ENCODE measurements at regions of chr9 and their contacts with region 1.

Region 1: DNA sequence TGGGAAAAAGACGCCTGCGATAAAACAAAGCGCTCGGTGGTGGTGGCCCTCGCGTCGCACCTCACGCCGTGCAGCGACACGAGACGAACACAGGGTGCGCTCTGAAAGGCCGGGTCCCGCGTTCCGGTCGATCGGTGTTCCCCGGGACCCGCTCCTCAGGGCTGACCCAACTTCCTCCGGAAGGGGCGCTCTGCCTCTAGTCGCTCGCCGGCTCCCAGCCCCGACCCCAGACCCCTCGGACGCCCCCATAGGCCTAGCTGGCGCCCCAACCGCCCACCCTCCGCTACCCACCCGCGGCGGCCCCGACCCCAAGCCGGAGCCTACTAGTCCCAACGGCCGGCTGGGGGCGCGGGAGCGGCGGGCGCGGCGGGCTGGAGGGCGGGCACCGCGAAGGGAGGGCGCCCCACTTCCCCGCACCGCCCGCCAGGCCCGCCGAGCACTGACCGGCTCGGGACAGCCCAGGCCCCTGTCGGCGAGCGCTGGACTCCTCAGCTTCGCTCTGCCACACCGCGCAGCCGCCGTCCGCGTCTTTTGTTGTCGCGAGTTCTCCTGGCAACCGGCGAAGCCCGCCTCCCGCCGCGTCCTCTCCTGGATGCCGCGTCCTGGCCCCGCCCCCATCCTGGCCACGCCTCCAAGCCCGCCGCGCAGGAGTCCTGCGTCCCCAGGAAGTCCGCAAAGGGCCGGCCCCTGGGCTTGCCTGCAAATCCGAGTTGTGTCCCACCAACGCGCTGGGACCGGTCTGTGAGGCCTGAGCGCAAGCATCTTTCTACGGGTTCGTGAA is at the start of gene KIF27:
- DNase-seq: peak; percentile 98
- H3K4me3 Mint-ChIP-seq: peak within 1 kb of the TSS; percentile 82
- H3K27ac Mint-ChIP-seq: peak within 1 kb of the TSS; percentile 90
- H3K4me1 Mint-ChIP-seq: peaks cover 10% of the 10 kb centered on the region
- H3K27me3 Mint-ChIP-seq: no peaks in the 10 kb centered on the region
- total RNA-seq, gene KIF27: 2.7 to 3.8 TPM

Region 2: GRCh38 chr9:83707768-83708514 is 213.2 kb before region 1 on chr9 and contains the start of gene UBQLN1:
- CTCF ChIA-PET with region 1: no interaction called
- intact Hi-C with region 1: loop called (anchors 1 kb)
- DNase-seq: peak; percentile 95
- H3K4me3 Mint-ChIP-seq: peak within 1 kb of the TSS; percentile 89
- H3K27ac Mint-ChIP-seq: peak within 1 kb of the TSS; percentile 98
- H3K4me1 Mint-ChIP-seq: peaks cover 37% of the 10 kb centered on the region
- H3K27me3 Mint-ChIP-seq: no peaks in the 10 kb centered on the region
- total RNA-seq, gene UBQLN1: 84.8 to 87.1 TPM

Region 3: DNA sequence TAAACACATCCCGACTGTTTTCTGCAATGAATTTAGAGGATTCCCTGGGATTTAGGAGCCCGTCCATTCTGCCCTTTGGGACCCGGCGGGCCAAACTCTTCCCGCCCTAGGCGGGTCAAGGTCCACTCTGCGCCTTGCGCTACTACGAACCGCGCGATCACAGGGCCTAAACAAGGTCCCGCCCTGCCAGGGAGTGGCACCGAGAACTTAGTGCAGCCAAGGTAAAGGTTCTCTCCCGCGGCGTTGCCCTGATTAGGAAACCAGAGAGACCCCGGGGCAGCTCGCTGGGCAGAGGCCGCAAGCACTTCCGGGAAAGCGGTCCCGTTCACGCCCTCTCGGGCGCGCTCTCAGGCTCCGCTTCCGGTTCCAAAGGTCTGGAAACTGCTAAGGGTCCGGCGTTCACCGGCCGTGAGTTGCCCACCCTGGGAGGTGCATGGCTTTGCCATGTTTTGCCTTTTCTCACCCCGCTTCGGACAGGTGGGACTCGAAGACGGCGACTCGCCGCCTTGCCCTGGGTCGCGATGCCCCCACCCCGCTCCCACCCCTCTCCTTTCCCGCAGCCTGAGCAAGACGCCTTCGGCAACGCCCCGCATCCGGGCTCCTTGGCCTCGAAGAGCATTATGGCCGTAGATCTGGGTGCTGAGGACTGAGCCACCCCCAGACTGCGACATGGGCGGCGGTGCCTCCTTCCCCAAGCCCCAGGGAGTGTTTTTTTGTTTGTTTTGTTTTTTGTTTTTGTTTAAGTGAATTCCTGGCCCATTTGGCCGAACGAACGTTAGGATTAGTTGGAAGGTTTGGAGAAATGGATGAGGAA is 35.5 kb after region 1 on chr9:
- CTCF ChIA-PET with region 1: interaction called, 5 read pairs
- intact Hi-C with region 1: loop called (anchors 1 kb)
- DNase-seq: peak; percentile 75
- H3K4me3 Mint-ChIP-seq: peak overlapping the region; percentile 97
- H3K27ac Mint-ChIP-seq: peak overlapping the region; percentile 87
- H3K4me1 Mint-ChIP-seq: peaks cover 15% of the 10 kb centered on the region
- H3K27me3 Mint-ChIP-seq: no peaks in the 10 kb centered on the region

Region 4: DNA sequence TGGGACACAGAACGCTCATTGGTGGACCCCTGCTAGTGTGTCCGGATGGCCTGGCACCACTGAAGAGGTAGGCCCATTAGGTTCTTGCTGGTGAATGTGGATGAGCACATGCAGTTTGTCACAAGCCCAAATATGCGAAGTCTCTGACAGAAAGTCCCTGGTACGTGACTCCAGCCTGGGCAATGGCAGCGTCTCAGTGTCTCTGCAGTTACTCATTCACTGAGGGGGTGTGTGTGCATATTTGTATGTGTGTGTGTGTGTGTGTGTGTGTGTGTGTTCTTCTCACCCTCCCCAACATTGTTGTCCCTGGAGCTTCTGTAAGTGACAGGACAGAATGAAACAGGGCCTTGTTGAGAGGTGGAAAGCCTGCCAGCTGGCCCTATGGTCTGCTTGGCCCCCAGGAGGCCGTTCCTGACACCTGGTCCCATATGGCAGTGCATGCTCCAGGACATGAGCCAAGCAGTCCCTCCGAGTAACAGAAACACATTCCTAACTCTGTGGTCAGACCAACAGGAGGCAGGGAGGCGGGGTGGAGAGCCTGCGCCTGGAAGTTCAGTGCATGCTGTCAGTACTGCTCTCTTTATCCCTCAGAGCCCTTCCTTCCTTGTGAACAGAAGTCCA is 249.5 kb after region 1 on chr9:
- CTCF ChIA-PET with region 1: no interaction called
- intact Hi-C with region 1: loop called (anchors 5 kb)
- DNase-seq: no peak
- H3K4me3 Mint-ChIP-seq: no peak overlapping the region
- H3K27ac Mint-ChIP-seq: no peak overlapping the region
- H3K4me1 Mint-ChIP-seq: no peaks in the 10 kb centered on the region
- H3K27me3 Mint-ChIP-seq: peaks cover 1% of the 10 kb centered on the region

Region 5: DNA sequence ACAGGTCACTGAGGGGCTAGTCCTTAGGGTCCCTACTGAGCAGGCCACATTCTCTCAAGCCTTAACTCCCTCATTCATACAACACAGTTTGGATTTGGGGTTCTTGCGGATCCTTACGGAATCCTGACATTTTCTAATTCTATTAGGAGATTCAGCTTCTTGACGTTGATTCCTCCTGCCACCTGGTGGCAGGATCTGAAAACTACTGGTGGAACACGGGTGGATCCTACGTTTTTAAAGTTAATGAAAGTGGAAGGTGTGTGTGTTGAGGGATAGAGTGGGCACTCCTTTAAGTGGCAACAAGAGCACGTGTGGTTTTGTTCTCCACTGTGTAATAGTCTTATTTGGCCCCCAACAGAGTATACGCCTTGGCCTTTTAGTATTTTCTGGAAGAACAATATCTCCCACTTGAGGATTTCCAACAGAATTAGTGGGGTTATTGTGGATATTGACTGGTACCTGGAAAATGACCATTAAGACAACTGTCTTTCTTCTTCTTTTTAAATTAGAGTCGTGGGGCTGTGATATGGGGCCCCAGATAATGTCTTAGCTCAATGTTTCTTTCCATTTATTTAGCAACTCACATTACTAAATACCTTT is 394.3 kb after region 1 on chr9:
- CTCF ChIA-PET with region 1: interaction called, 3 read pairs
- intact Hi-C with region 1: loop called (anchors 1 kb)
- DNase-seq: peak; percentile 79
- H3K4me3 Mint-ChIP-seq: no peak overlapping the region
- H3K27ac Mint-ChIP-seq: no peak overlapping the region
- H3K4me1 Mint-ChIP-seq: peaks cover 14% of the 10 kb centered on the region
- H3K27me3 Mint-ChIP-seq: no peaks in the 10 kb centered on the region

Region 6: GRCh38 chr9:85741875-85742629 is 1820.9 kb after region 1 on chr9 and contains the start of gene AGTPBP1:
- CTCF ChIA-PET with region 1: no interaction called
- intact Hi-C with region 1: loop called (anchors 1 kb)
- DNase-seq: peak; percentile 95
- H3K4me3 Mint-ChIP-seq: peak within 1 kb of the TSS; percentile 83
- H3K27ac Mint-ChIP-seq: peak within 1 kb of the TSS; percentile 94
- H3K4me1 Mint-ChIP-seq: peaks cover 30% of the 10 kb centered on the region
- H3K27me3 Mint-ChIP-seq: peaks cover 6% of the 10 kb centered on the region
- total RNA-seq, gene AGTPBP1: 37.6 to 39.0 TPM

Measured in activated naive CD4-positive, alpha-beta T cell treated with anti-CD3 and anti-CD28 coated beads for 36 hours (primary cell).